HepG2 (cell line): ENCODE measurements at regions of chr11 and their contacts with region 1.

Region 1: GRCh38 chr11:84437071-84437980 is 1151.2 kb upstream of the CCDC90B start:
- DNase-seq: peak; percentile 14
- ATAC-seq: peak; percentile 88
- H3K4me3 ChIP-seq: no peak overlapping the region
- H3K27ac ChIP-seq: no peak overlapping the region
- H3K4me1 ChIP-seq: no peaks in the 10 kb centered on the region
- H3K27me3 ChIP-seq: no peaks in the 10 kb centered on the region
- CTCF ChIP-seq: no peak
- EP300 ChIP-seq: no peak
- POLR2A ChIP-seq: no peak
- RAD21 ChIP-seq: no peak

Region 2: DNA sequence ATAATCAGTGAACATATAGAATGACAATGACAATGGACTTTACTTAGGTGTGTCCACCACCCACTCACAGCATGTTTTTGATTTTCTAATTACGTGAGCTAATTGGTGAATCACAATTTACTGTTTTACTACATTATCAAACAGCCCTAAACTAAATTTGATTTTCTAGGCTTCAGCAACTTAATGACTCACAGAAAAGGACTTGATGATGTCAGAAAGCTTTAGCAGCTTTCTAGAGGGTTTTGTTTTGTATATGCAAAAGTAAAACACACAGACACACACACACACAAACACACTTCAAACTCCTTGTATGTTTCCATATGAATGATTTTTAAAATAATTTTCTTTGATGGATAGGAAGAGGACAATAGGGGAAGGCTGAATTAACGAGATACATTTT is 272.6 kb before region 1 on chr11:
- CTCF ChIA-PET with region 1: no interaction called
- POLR2A ChIA-PET with region 1: no interaction called
- in situ Hi-C with region 1: no loop called
- intact Hi-C with region 1: no loop called
- DNase-seq: no peak
- ATAC-seq: no peak
- H3K4me3 ChIP-seq: no peak overlapping the region
- H3K27ac ChIP-seq: no peak overlapping the region
- H3K4me1 ChIP-seq: no peaks in the 10 kb centered on the region
- H3K27me3 ChIP-seq: no peaks in the 10 kb centered on the region
- CTCF ChIP-seq: no peak
- EP300 ChIP-seq: no peak
- POLR2A ChIP-seq: no peak
- RAD21 ChIP-seq: no peak

Region 3: DNA sequence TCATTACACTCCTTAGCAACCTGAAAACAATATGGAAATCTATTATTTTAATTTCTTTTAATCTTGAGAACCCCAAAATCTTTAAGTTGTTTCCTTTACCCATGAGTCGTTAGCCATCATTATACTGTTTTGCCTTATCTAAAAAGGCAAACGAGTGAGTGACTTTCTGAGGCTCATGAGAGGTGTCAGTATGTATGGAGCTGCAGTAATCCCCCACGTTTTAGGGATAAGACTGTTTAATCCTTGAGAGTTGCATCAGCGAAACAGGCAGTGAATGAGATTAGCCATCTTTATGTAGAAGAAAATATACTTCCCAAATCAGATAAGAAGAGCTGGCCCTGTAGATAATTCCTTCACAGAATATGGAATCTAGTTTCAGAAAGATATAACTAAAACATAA is 42.8 kb after region 1 on chr11:
- CTCF ChIA-PET with region 1: no interaction called
- POLR2A ChIA-PET with region 1: no interaction called
- in situ Hi-C with region 1: no loop called
- intact Hi-C with region 1: loop called (anchors 1 kb)
- DNase-seq: no peak
- ATAC-seq: no peak
- H3K4me3 ChIP-seq: no peak overlapping the region
- H3K27ac ChIP-seq: no peak overlapping the region
- H3K4me1 ChIP-seq: no peaks in the 10 kb centered on the region
- H3K27me3 ChIP-seq: no peaks in the 10 kb centered on the region
- CTCF ChIP-seq: no peak
- EP300 ChIP-seq: no peak
- POLR2A ChIP-seq: no peak
- RAD21 ChIP-seq: no peak